Gastrocnemius medialis (tissue), 4 donors: ENCODE measurements at regions of chr16 and their contacts with region 1.

Region 1: GRCh38 chr16:89241187-89242007 is 23.9 kb downstream of the ZNF778 start:
- DNase-seq: peak; percentile 48 to 74
- ATAC-seq: peak; percentile 88 to 90
- H3K4me3 ChIP-seq: peak overlapping the region; percentile 71 to 79 (median 75)
- H3K27ac ChIP-seq: peak overlapping the region; percentile 83 to 98 (median 92)
- H3K4me1 ChIP-seq: peaks cover 4 to 8% of the 10 kb centered on the region in 2 donors
- H3K27me3 ChIP-seq: peaks cover 4% of the 10 kb centered on the region in 3 donors
- CTCF ChIP-seq: no peak
- POLR2A ChIP-seq: peak; percentile 82 to 88

Region 2: GRCh38 chr16:87950765-87951549 is 1290.4 kb before region 1 on chr16 and contains the start of gene BANP:
- in situ Hi-C with region 1: no loop called
- intact Hi-C with region 1: loop called (anchors 10 kb)
- DNase-seq: peak; percentile 98 to 99
- ATAC-seq: peak; percentile 93
- H3K4me3 ChIP-seq: peak within 1 kb of the TSS; percentile 80 to 83 (median 82)
- H3K27ac ChIP-seq: peak within 1 kb of the TSS; percentile 84 to 96 (median 92)
- H3K4me1 ChIP-seq: peaks cover 22 to 35% of the 10 kb centered on the region in 2 donors
- H3K27me3 ChIP-seq: no peaks in the 10 kb centered on the region
- CTCF ChIP-seq: peak; percentile 46 to 74 (median 65)
- POLR2A ChIP-seq: peak in 1 of 2 donors; percentile 85
- total RNA-seq, gene BANP: 7.0 to 20.6 (median 16.1) TPM

Region 3: DNA sequence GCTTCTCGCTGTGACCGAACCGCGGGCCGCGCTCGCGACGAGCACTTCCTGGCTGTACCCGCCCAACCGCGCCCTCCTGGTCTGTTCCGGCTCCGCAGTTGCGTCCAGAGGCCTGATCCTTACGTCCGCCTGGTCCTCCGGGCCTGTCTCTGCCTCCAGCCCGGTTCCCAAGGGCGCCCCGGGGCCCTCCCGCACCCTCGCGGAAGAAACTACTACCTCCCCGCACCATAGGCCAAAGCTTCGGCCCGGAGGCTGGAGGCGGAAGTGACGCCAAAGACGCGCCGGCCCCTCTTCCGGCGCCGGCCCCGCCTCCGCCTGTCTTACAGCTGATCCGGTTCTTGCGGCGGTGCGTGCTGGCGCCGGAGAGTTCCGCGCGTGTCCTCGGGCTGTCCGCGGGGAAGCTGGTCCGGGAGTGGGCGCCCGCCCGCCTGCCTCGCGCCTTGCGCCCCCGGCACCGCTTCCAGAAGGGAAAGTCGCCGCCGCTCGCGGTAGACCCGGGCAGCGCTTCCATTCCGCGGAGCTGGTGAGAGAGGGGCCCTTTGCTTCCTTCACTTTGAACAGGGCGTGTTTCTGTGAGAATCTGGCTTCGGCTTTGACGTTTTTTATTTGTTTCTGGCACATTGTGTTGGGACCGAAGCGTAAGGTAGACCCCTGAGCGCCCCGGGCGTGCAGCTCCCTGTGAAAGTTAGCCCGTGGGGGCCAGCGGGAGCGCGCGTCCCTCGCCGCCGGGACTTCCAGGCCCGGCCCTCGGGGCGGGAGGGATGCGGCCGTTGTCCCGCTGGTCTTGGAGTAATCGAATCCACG is 23.8 kb before region 1 on chr16 and contains the start of gene ZNF778:
- in situ Hi-C with region 1: no loop called
- intact Hi-C with region 1: loop called (anchors 2 kb)
- DNase-seq: peak; percentile 73 to 79
- ATAC-seq: peak; percentile 82 to 87
- H3K4me3 ChIP-seq: peak within 1 kb of the TSS; percentile 84 to 98 (median 92)
- H3K27ac ChIP-seq: peak within 1 kb of the TSS; percentile 95 to 100 (median 98)
- H3K4me1 ChIP-seq: peaks cover 25% of the 10 kb centered on the region in 2 donors
- H3K27me3 ChIP-seq: no peaks in the 10 kb centered on the region
- CTCF ChIP-seq: peak in 1 of 5 experiments; percentile 24
- POLR2A ChIP-seq: peak; percentile 94 to 97
- total RNA-seq, gene ZNF778: 10.7 to 21.3 (median 17.9) TPM

Region 4: GRCh38 chr16:89289428-89290395 is 48.3 kb after region 1 on chr16:
- in situ Hi-C with region 1: no loop called
- intact Hi-C with region 1: loop called (anchors 2 kb)
- DNase-seq: peak; percentile 33 to 68
- ATAC-seq: peak; percentile 27 to 80
- H3K4me3 ChIP-seq: no peak overlapping the region
- H3K27ac ChIP-seq: peak overlapping the region in 3 of 4 donors; percentile 2 to 8 (median 7)
- H3K4me1 ChIP-seq: peaks cover 8 to 9% of the 10 kb centered on the region in 2 donors
- H3K27me3 ChIP-seq: no peaks in the 10 kb centered on the region
- CTCF ChIP-seq: peak; percentile 61 to 87 (median 75)
- POLR2A ChIP-seq: no peak

Region 5: DNA sequence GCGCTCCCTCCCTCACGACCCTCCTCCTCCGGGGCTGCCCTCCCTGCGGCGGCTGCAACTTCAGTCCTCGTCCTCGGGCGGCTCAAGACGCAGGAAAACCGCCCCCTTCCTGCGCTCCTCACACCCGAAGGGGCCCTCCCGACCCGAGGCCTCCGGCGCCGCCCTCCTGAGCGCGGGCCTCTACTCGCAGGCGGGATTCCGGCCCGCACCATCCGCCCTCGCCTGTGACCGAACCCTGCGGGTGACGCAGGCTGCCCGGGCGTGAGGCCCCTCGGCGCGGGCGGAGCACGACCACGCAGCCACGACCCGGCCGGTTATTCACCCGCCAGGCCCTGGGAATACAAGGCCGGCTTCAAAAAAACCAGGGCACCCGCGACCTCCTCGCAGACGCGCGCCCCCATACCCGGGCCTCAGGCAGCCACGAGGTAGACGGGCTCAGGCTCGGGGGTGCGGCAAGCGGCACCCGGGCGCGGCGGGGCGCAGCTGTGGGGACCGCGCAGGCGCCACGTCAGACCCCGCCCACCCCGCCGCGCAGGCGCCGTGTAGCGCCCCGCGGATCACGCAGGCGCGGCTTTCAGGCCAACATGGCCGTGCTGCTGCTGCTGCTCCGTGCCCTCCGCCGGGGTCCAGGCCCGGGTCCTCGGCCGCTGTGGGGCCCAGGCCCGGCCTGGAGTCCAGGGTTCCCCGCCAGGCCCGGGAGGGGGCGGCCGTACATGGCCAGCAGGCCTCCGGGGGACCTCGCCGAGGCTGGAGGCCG is 266.6 kb after region 1 on chr16 and contains the start of gene SPG7:
- in situ Hi-C with region 1: loop called in 1 of 4 experiments (anchors 25 kb)
- intact Hi-C with region 1: loop called (anchors 2 kb)
- DNase-seq: peak; percentile 59 to 77
- ATAC-seq: peak; percentile 87 to 92
- H3K4me3 ChIP-seq: peak within 1 kb of the TSS; percentile 70 to 98 (median 86)
- H3K27ac ChIP-seq: peak within 1 kb of the TSS; percentile 82 to 98 (median 94)
- H3K4me1 ChIP-seq: peaks cover 26 to 31% of the 10 kb centered on the region in 2 donors
- H3K27me3 ChIP-seq: no peaks in the 10 kb centered on the region
- CTCF ChIP-seq: peak in 2 of 5 experiments; percentile 7 to 19
- POLR2A ChIP-seq: peak; percentile 98
- total RNA-seq, gene SPG7: 67.7 to 117 (median 100.0) TPM

Region 6: DNA sequence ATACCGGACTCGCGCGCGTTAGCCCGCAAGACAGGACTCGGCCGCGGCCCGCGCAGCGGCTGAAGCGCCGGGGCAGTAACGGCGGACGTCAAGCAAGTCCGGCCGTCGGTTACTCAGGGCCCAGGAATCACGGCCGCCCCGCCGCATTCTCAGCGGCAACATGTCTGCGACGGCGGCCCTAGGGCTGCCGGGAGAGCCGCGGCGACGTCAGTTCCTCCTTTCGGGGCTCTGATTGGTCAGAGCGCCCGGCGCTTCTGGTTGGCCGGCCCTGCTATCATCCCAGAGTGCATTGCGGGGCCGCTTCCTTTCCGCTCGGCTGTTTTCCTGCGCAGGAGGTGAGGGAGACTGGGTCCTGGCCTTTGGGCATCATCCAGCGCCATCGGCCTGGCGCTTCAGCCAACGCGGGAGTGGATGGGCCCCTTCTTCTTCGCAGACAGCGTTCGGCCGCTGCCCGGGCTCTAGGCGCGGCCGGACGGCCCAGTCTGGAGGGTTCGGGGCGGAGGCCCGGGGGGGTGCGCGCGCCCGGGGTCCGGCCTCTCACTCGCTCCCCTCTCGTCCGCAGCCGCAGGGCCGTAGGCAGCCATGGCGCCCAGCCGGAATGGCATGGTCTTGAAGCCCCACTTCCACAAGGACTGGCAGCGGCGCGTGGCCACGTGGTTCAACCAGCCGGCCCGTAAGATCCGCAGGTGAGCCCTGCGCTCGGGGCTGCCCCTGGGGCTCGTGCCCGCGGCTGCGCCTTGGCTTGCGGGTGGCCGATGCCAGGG is 319.2 kb after region 1 on chr16 and contains the start of gene RPL13:
- in situ Hi-C with region 1: no loop called
- intact Hi-C with region 1: loop called (anchors 2 kb)
- DNase-seq: peak; percentile 92 to 95
- ATAC-seq: peak; percentile 82 to 86
- H3K4me3 ChIP-seq: peak within 1 kb of the TSS; percentile 60 to 99 (median 78)
- H3K27ac ChIP-seq: peak within 1 kb of the TSS; percentile 91 to 99 (median 96)
- H3K4me1 ChIP-seq: peaks cover 35 to 39% of the 10 kb centered on the region in 2 donors
- H3K27me3 ChIP-seq: no peaks in the 10 kb centered on the region
- CTCF ChIP-seq: peak in 1 of 5 experiments; percentile 15
- POLR2A ChIP-seq: peak; percentile 98
- total RNA-seq, gene RPL13: 4,295 to 5,889 (median 4,806) TPM

Region 7: DNA sequence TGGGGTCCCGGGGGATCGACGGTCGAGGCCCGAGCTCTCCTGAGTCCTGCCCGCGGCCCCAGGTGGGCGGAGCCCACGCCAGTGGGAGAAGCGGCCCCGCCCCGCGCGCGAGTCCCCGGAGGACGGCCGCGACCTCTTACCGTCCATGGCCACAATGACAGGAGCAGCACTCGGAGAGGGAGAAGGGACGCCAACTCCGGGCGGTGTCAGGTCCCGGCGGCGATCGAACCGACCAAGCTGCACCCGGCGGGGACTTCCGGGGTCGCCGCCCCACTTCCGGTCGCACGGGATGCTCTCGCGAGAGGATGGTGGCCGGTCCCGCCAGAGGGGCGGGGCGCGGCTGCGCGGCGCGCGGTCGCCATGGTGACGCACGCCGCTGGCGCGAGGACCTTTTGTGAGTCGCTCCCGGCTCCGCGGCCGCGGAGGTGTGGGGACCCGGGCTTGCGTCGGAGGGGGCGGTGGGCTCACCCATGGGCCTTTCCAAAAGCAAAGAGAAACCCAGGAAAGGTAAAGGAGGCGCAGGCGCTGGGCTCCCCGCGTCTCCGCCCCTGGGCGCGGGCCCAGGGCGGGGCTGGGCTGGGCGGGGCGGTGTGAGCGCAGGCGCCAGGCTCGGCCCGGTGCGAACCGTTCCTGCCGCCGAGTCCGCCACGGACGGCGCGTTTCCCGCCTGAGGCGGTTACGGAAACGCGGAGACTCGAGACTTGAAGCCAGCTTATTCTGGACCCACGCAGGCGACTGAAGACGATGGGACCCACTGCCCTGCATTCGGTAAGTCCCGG is 416.2 kb after region 1 on chr16 and contains the starts of genes CHMP1A and SPATA33:
- in situ Hi-C with region 1: no loop called
- intact Hi-C with region 1: loop called (anchors 10 kb)
- DNase-seq: peak; percentile 70 to 84
- ATAC-seq: peak; percentile 98
- H3K4me3 ChIP-seq: peak within 1 kb of the TSS; percentile 96 to 100 (median 99)
- H3K27ac ChIP-seq: peak within 1 kb of the TSS; percentile 86 to 91 (median 89)
- H3K4me1 ChIP-seq: peaks cover 18 to 19% of the 10 kb centered on the region in 2 donors
- H3K27me3 ChIP-seq: no peaks in the 10 kb centered on the region
- CTCF ChIP-seq: no peak
- POLR2A ChIP-seq: peak; percentile 54 to 78
- total RNA-seq, gene CHMP1A: 53.4 to 105 (median 78.8) TPM
- total RNA-seq, gene SPATA33: 1.2 to 2.7 (median 2.1) TPM